Left cardiac atrium (tissue), 4 donors: ENCODE measurements at regions of chr6 and their contacts with region 1.

Region 1: DNA sequence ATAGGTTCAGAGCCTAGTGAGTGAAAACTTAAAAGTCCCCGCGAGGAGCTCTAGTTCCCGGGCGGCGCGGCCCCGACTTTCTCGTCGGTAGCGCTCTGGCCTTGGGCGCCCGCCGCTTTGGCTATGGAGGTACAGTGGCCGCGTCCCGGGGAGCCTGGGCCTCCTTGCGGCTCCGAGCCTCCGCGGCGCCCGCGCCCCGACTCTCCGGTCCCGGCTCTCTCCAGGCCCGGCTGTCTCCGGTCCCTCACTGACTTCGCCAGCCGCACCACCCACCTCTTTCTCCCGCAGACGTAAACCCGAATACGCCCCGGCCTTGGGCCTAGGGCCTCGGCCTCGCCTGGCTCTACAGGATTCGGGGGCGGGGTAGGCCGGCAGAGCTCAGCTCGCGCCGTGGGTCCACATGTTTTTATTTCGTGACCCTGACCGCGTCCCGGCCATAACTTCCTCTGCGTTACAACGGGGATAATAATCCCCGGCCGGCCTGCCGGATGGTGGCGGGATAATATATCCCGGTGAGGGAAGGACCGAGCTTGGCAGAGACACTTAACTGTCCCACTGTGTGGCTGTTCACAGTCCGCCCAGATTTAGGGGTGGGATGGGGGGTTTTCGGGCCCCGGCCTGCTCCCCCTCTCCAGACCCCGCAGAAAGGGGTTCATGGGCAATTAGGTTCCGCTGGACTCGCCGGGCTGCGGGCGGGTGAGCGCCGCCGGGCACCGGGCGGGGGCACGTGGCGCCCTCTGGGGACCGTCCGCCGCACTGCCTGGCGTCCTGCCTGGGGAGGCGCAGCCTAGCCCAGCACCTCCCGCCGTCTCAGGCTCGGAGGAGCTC is 10.0 kb upstream of the TBX18 start:
- DNase-seq: peak; percentile 71
- ATAC-seq: peak; percentile 83 to 89

Region 2: GRCh38 chr6:84422380-84422968 is 351.9 kb before region 1 on chr6:
- intact Hi-C with region 1: loop called in 1 of 2 experiments (anchors 5 kb)
- DNase-seq: peak; percentile 58
- ATAC-seq: peak; percentile 93 to 96

Region 3: GRCh38 chr6:84847365-84848160 is 73.2 kb after region 1 on chr6:
- intact Hi-C with region 1: no loop called
- DNase-seq: no peak
- ATAC-seq: peak in 1 of 2 donors; percentile 67

Region 4: GRCh38 chr6:85041376-85041775 is 267.0 kb after region 1 on chr6:
- intact Hi-C with region 1: no loop called
- DNase-seq: no peak
- ATAC-seq: no peak